ENCODE measurements at regions of chr5 and their contacts with region 1.

Region 1: DNA sequence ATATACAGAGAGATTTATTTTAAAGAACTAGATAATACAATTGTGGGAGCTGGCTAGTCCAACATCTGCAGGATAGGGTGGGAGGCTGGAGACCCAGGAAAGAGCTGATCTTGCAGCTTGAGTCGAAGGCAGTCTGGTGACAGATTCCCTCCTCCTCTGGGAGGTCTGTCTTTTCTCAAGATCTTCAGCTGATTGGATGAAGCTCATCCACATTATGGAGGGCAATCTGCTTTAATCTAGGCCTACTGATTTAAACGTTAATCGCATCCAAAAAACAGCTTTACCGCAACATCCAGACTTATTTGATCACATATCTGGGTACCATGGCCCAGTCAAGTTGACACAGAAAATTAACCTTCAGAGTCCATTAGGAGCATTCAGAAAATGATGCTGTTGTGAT is 168.1 kb downstream of the ATPSCKMT start:
- DNase-seq: no peak
- H3K4me3 ChIP-seq: no peak overlapping the region
- H3K27ac ChIP-seq: no peak overlapping the region
- H3K4me1 ChIP-seq: no peaks in the 10 kb centered on the region
- H3K27me3 ChIP-seq: peaks cover 41% of the 10 kb centered on the region
- CTCF ChIP-seq: no peak

Region 2: GRCh38 chr5:10110228-10110627 is 28.6 kb after region 1 on chr5:
- CTCF ChIA-PET with region 1: interaction called, 19 read pairs
- POLR2A ChIA-PET with region 1: no interaction called
- intact Hi-C with region 1: no loop called
- DNase-seq: no peak
- H3K4me3 ChIP-seq: no peak overlapping the region
- H3K27ac ChIP-seq: no peak overlapping the region
- H3K4me1 ChIP-seq: no peaks in the 10 kb centered on the region
- H3K27me3 ChIP-seq: peaks cover 32% of the 10 kb centered on the region
- CTCF ChIP-seq: no peak

Region 3: GRCh38 chr5:10364186-10364683 is 282.7 kb after region 1 on chr5:
- CTCF ChIA-PET with region 1: no interaction called
- POLR2A ChIA-PET with region 1: no interaction called
- intact Hi-C with region 1: no loop called
- DNase-seq: peak in 1 of 2 experiments; percentile 23
- H3K4me3 ChIP-seq: no peak overlapping the region
- H3K27ac ChIP-seq: no peak overlapping the region
- H3K4me1 ChIP-seq: 0 out of 2 replicates have a peak, but pooled peaks cover 19% of the 10 kb centered on the region
- H3K27me3 ChIP-seq: no peaks in the 10 kb centered on the region
- CTCF ChIP-seq: peak; percentile 61

Region 4: GRCh38 chr5:10825897-10826644 is 744.5 kb after region 1 on chr5:
- CTCF ChIA-PET with region 1: no interaction called
- POLR2A ChIA-PET with region 1: no interaction called
- intact Hi-C with region 1: no loop called
- DNase-seq: no peak
- H3K4me3 ChIP-seq: no peak overlapping the region
- H3K27ac ChIP-seq: no peak overlapping the region
- H3K4me1 ChIP-seq: no peaks in the 10 kb centered on the region
- H3K27me3 ChIP-seq: no peaks in the 10 kb centered on the region
- CTCF ChIP-seq: 0 out of 2 replicates have a peak, but pooled peaks have one; percentile 18